GM12878 (cell line): ENCODE measurements at regions of chr5 and their contacts with region 1.

Region 1: DNA sequence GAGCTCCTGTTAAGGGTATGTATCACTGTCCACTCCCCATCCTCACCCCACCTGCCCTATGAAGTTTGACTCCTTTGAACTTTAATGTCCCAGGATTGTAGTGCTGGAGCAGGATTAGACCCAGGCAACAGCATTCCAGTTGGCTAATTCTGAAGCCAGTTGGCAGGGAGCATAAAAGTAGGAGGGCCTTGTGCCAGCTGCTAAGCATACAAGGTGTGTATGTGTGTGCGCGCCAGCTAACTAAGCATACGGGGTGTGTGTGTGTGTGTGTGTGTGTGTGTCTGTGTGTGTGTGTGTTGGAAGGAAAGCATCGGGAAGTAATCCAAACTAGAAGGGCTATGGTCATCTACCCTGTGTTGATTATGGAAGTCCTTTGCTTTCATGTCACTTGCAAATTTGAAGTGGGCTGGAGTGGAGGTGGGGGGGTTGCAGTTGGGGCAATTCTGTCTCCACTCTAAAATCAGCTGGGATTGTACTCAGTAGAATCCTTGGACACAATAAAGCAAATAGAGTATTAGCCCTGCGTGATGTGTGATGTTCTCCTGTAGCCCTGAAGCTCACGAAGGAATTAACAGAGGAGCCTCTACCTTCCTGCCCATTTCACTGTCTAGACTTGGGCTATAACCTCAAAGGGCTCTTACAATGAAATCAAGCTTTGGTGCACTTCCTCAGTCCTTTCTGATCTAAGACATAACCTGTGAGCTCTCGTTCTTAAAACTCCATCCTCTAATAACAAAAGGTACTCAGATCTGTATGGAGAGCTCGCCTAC is 26.9 kb downstream of the HMGCR start:
- DNase-seq: no peak
- ATAC-seq: no peak
- H3K4me3 ChIP-seq: no peak overlapping the region
- H3K27ac ChIP-seq: no peak overlapping the region
- H3K4me1 ChIP-seq: peaks cover 14% of the 10 kb centered on the region
- H3K27me3 ChIP-seq: no peaks in the 10 kb centered on the region
- CTCF ChIP-seq: no peak
- EP300 ChIP-seq: no peak
- POLR2A ChIP-seq: 0 out of 2 replicates have a peak, but pooled peaks have one; percentile 29
- RAD21 ChIP-seq: no peak

Region 2: DNA sequence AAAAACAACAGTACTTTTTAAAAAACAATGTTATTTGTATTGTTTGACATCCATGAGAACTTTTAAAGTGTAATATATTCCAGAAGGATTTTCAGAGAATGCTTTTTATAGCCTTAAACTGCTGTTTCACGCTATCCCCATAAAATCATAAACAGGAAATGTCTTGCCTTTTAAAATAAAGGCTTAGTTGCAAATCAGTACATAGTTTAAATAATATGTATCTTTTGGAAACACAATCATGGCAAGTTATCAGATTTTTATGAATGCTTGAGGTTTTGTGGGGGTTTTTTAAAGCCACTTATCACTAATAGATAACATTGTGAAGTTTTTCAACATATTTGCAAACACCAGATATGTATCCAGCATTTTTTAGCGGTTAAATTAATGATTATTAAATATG is 1296.4 kb after region 1 on chr5:
- CTCF ChIA-PET with region 1: no interaction called
- POLR2A ChIA-PET with region 1: no interaction called
- RAD21 ChIA-PET with region 1: no interaction called
- SMC1A ChIA-PET with region 1: no interaction called
- in situ Hi-C with region 1: no loop called
- intact Hi-C with region 1: loop called (anchors 10 kb)
- DNase-seq: no peak
- ATAC-seq: no peak
- H3K4me3 ChIP-seq: no peak overlapping the region
- H3K27ac ChIP-seq: no peak overlapping the region
- H3K4me1 ChIP-seq: no peaks in the 10 kb centered on the region
- H3K27me3 ChIP-seq: no peaks in the 10 kb centered on the region
- CTCF ChIP-seq: no peak
- EP300 ChIP-seq: no peak
- POLR2A ChIP-seq: no peak
- RAD21 ChIP-seq: no peak